ENCODE measurements at regions of chrX and their contacts with region 1.

Region 1: DNA sequence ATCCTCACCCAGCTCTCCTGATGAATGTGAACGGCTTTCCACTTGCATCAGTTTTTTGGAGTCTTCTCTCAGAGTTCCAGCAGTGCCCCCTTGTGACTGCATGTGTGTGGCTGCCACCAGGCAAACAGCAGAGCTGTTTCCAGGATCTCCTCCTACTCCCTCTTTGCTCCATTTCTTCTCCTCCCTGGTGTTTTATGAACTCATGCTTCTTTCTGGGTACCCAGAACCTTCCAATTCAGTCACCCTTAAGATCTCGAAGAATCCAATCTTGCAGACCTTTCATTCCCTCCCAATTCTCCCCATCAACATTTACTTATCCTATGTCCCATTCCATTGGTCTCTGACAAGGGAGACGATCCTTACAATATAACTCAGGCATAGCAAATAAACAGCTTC is 6.8 kb upstream of the TCEANC start:
- DNase-seq: no peak
- ATAC-seq: peak; percentile 79; the same call in 1 of the 2 replicates
- H3K4me3 ChIP-seq: no peak overlapping the region
- H3K27ac ChIP-seq: peak overlapping the region; percentile 44; the same call in 1 of the 2 replicates
- H3K4me1 ChIP-seq: no peaks in the 10 kb centered on the region
- H3K27me3 ChIP-seq: no peaks in the 10 kb centered on the region
- CTCF ChIP-seq: peak; percentile 75

Region 2: DNA sequence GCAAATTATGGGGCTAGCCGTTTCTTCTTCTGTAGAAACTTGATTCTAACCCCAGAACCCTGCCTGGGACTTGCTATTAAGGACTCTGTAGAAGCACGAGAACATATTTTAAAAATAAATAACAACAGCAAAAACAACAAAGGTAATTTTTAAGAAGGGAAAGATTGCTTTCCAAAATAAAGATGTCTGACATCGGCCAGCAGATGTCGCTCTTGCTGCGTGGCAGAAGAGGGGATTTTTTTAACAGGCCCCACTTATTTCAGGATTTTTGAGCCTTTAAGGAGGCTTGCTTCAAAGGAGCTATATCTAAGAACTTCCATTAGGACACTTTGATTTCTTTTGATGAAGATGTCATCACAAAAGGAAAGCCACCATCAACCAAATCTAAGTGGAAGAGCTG is 139.6 kb before region 1 on chrX:
- CTCF ChIA-PET with region 1: interaction called, 4 read pairs
- POLR2A ChIA-PET with region 1: no interaction called
- in situ Hi-C with region 1: no loop called
- intact Hi-C with region 1: loop called (anchors 2 kb)
- DNase-seq: no peak
- ATAC-seq: no peak
- H3K4me3 ChIP-seq: no peak overlapping the region
- H3K27ac ChIP-seq: peak overlapping the region; percentile 17; the same call in 1 of the 2 replicates
- H3K4me1 ChIP-seq: no peaks in the 10 kb centered on the region
- H3K27me3 ChIP-seq: no peaks in the 10 kb centered on the region
- CTCF ChIP-seq: peak; percentile 73

Measured in Panc1 (cell line).